Endothelial cell of umbilical vein (primary cell): ENCODE measurements at regions of chr9 and their contacts with region 1.

Region 1: DNA sequence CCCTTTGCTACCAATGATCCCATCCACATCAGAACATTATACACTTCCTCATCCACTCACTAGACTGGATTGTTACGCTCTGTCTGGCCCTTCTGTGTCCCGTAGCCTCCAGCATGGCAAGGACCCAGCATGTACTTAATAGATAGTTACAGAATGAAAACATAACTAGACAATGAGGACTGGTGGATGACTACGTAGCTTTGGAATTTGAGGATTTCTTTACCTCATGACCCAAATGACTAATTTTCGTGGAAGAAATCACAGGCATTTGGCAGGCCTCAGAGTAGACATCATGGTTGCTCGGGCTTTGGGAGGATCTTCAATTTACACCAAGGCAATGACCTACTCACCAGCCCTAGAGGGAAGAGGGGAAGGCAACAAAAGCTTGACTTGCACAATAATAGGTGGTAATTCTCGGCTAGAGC is 299.8 kb downstream of the TLE1 start:
- DNase-seq: peak; percentile 98
- H3K4me3 ChIP-seq: no peak overlapping the region
- H3K27ac ChIP-seq: peak overlapping the region; percentile 100
- H3K4me1 ChIP-seq: peaks cover 31% of the 10 kb centered on the region
- H3K27me3 ChIP-seq: no peaks in the 10 kb centered on the region
- CTCF ChIP-seq: no peak
- POLR2A ChIP-seq: peak; percentile 60

Region 2: GRCh38 chr9:81506941-81507864 is 117.6 kb after region 1 on chr9:
- CTCF ChIA-PET with region 1: no interaction called
- POLR2A ChIA-PET with region 1: no interaction called
- dilution Hi-C with region 1: no loop called
- intact Hi-C with region 1: no loop called
- DNase-seq: no peak
- H3K4me3 ChIP-seq: no peak overlapping the region
- H3K27ac ChIP-seq: no peak overlapping the region
- H3K4me1 ChIP-seq: no peaks in the 10 kb centered on the region
- H3K27me3 ChIP-seq: no peaks in the 10 kb centered on the region
- CTCF ChIP-seq: no peak
- POLR2A ChIP-seq: no peak

Region 3: GRCh38 chr9:81521892-81522291 is 132.3 kb after region 1 on chr9:
- CTCF ChIA-PET with region 1: interaction called, 7 read pairs
- POLR2A ChIA-PET with region 1: no interaction called
- dilution Hi-C with region 1: no loop called
- intact Hi-C with region 1: loop called (anchors 2 kb)
- DNase-seq: no peak
- H3K4me3 ChIP-seq: no peak overlapping the region
- H3K27ac ChIP-seq: no peak overlapping the region
- H3K4me1 ChIP-seq: peaks cover 8% of the 10 kb centered on the region
- H3K27me3 ChIP-seq: no peaks in the 10 kb centered on the region
- CTCF ChIP-seq: no peak
- POLR2A ChIP-seq: no peak

Region 4: DNA sequence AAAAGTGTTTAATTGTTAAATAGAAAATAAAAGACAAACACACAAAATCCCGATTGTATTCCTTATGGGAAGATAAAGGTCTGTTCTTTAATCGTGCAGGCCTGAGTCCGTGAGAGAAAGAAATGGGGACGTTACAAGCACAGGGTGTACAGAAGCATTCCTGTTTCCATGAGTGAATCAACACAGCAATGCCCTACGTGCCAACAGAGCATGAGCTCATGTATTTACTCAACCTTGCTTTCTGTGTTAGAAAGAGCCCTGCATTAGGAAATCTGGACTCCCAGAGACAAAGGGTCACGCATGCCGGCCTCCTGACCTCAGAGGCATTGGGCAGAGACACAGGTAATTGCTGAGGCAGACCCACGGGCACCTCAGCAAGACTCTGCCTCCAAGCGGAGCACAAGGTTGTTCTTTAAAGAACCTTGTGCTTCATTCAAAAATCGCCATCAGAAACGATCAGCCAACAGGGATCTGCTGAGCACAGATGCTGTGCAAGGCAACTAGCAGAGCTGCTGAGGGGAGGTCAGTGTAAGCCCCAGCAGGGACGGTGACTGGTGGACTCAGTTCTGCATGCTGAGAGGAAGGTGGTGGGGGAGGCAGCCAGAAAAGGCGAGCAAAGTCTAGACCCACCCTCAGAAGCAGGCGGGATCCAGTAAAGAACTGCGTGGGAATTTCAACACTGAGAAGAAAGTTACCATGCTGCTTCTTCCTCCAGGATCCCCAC is 198.7 kb after region 1 on chr9:
- CTCF ChIA-PET with region 1: no interaction called
- POLR2A ChIA-PET with region 1: interaction called, 3 read pairs
- dilution Hi-C with region 1: no loop called
- intact Hi-C with region 1: loop called (anchors 1 kb)
- DNase-seq: peak; percentile 94
- H3K4me3 ChIP-seq: no peak overlapping the region
- H3K27ac ChIP-seq: peak overlapping the region; percentile 84
- H3K4me1 ChIP-seq: peaks cover 20% of the 10 kb centered on the region
- H3K27me3 ChIP-seq: no peaks in the 10 kb centered on the region
- CTCF ChIP-seq: no peak
- POLR2A ChIP-seq: no peak

Region 5: DNA sequence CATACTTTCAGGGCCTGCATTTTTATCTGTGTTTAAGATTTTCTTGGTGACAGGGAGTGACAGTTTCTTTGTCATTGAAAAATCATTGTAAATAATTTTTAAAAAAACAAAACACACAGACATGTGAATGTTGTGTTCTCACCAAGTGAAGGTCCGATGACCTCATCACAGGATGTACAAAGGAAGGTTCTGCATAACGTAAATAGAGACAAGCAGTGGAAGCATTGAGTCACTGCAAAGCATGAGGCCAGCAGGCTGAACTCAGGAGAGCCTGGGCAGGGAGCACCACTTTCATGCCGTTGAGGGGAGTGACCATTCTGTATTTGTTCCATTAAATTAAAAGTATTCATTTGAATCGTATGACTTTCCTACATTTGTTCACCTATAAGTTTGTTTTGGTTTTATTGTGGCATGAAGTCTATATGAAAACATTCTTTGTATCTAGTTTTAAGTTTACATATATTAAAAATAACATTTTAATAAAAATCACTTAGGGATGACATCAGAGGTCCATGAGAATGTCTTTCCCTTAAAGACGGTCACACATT is 370.2 kb after region 1 on chr9:
- CTCF ChIA-PET with region 1: no interaction called
- POLR2A ChIA-PET with region 1: no interaction called
- dilution Hi-C with region 1: no loop called
- intact Hi-C with region 1: loop called (anchors 1 kb)
- DNase-seq: peak; percentile 95
- H3K4me3 ChIP-seq: no peak overlapping the region
- H3K27ac ChIP-seq: peak overlapping the region; percentile 91
- H3K4me1 ChIP-seq: peaks cover 11% of the 10 kb centered on the region
- H3K27me3 ChIP-seq: no peaks in the 10 kb centered on the region
- CTCF ChIP-seq: no peak
- POLR2A ChIP-seq: no peak